GM12878 (cell line): ENCODE measurements at regions of chr10 and their contacts with region 1.

Region 1: DNA sequence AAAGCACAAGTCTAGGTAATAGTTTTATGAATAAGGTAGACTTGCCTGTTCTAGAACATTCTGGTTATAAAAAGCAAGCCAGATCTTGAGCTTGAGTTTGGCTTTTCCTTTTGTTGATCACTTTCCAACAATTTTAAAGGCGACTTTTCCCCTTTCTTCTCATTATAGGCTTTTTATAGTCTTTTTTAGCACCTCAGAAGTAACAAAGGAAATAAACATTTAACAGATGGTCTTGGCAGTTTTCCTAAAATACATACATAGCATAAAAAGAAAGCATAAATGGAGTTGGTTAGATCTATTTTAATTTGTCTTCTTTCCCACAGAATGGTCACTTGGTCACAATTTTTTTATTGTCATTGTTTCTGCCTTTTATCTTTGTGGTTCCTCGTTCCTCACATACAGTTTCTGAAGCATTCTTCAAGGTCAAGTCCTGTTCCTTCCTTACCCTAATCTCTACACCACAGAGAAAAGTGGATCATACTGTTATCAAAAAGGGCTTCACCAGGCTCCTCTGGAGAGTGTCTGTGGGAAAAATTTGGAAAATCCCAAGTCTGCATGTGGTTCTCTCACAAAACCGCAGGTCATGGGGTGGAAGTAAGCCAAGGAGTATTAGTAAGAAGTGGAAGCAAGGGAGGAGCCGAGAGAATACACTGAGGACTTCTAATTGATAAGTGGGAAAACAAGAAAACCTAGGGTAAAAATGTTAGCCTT is 31.3 kb downstream of the THNSL1 start:
- DNase-seq: no peak
- ATAC-seq: no peak
- H3K4me3 ChIP-seq: no peak overlapping the region
- H3K27ac ChIP-seq: no peak overlapping the region
- H3K4me1 ChIP-seq: no peaks in the 10 kb centered on the region
- H3K27me3 ChIP-seq: no peaks in the 10 kb centered on the region
- CTCF ChIP-seq: no peak
- EP300 ChIP-seq: no peak
- POLR2A ChIP-seq: no peak
- RAD21 ChIP-seq: no peak

Region 2: GRCh38 chr10:24756283-24756682 is 291.5 kb before region 1 on chr10:
- CTCF ChIA-PET with region 1: no interaction called
- POLR2A ChIA-PET with region 1: no interaction called
- RAD21 ChIA-PET with region 1: no interaction called
- SMC1A ChIA-PET with region 1: no interaction called
- in situ Hi-C with region 1: no loop called
- intact Hi-C with region 1: no loop called
- DNase-seq: no peak
- ATAC-seq: no peak
- H3K4me3 ChIP-seq: no peak overlapping the region
- H3K27ac ChIP-seq: no peak overlapping the region
- H3K4me1 ChIP-seq: no peaks in the 10 kb centered on the region
- H3K27me3 ChIP-seq: no peaks in the 10 kb centered on the region
- CTCF ChIP-seq: no peak
- EP300 ChIP-seq: no peak
- POLR2A ChIP-seq: no peak
- RAD21 ChIP-seq: no peak

Region 3: DNA sequence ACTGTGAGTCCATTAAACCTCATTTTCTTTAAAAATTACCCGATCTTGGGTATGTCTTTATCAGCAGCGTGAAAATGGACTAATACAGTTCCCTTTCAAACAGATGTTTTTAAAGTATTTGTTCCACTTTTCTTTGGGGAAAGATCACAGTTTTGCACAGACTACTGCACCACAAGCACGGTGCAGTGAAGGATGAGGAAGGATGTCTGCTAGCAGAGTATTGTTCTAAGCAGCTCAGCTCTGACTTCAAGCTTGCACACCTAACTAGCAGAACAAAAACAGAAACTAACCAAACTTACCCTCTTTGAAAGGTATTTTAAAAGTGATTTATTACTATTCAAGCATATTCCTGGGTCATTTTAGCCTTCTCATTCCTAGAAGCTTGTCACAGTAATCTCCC is 11.4 kb before region 1 on chr10:
- CTCF ChIA-PET with region 1: interaction called, 3 read pairs
- POLR2A ChIA-PET with region 1: no interaction called
- RAD21 ChIA-PET with region 1: no interaction called
- SMC1A ChIA-PET with region 1: interaction called, 17 read pairs
- in situ Hi-C with region 1: no loop called
- intact Hi-C with region 1: no loop called
- DNase-seq: peak; percentile 12
- ATAC-seq: peak; percentile 87
- H3K4me3 ChIP-seq: no peak overlapping the region
- H3K27ac ChIP-seq: no peak overlapping the region
- H3K4me1 ChIP-seq: no peaks in the 10 kb centered on the region
- H3K27me3 ChIP-seq: no peaks in the 10 kb centered on the region; a peak in 1 of 4 replicates
- CTCF ChIP-seq: no peak
- EP300 ChIP-seq: no peak
- POLR2A ChIP-seq: no peak
- RAD21 ChIP-seq: no peak

Region 4: DNA sequence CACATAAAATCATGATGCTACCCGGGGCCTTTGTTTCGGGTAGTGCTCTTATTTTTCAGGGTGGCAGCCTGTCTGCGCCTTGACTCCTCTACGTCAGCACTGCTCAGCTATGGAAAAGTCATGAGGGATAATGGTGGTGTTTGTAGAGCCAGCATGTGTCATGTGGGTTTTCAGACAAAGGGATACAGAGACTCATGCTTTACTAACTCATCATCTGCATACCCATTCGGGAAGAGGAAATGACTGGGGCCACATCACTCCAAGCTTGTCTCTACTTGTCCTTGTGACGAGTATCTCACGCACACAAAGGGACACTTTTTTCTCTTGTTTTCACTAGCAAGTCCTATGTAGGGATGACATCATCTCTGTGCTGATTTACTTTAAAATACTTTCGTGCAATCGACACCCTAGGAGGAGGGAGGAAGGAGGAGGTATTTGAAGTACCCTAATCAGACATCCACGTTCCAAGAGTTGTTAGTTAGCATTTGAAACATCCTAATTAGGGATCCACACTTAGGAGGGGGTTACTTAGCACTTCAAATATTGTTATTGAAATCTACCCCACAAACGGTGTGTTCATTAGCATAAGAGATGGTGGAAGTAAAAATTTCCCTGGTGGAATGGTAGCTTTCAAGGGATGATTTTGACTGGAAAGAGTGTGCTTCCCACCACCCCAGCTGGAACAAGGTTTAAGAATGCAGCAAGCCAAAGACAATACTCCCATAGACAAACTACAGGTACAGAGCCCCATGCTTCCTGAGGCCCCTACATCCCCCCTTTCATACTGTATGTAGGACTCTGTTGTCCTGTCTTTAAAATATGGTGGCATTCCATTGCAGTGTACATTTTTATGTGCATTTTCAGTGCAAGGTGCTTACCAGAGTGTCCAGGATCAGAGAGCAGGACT is 20.7 kb after region 1 on chr10:
- CTCF ChIA-PET with region 1: interaction called, 11 read pairs
- POLR2A ChIA-PET with region 1: no interaction called
- RAD21 ChIA-PET with region 1: no interaction called
- SMC1A ChIA-PET with region 1: no interaction called
- in situ Hi-C with region 1: no loop called
- intact Hi-C with region 1: no loop called
- DNase-seq: no peak
- ATAC-seq: peak; percentile 72
- H3K4me3 ChIP-seq: no peak overlapping the region
- H3K27ac ChIP-seq: no peak overlapping the region
- H3K4me1 ChIP-seq: no peaks in the 10 kb centered on the region
- H3K27me3 ChIP-seq: no peaks in the 10 kb centered on the region
- CTCF ChIP-seq: no peak
- EP300 ChIP-seq: no peak
- POLR2A ChIP-seq: no peak
- RAD21 ChIP-seq: no peak